ENCODE measurements at regions of chr22 and their contacts with region 1.

Region 1: GRCh38 chr22:43031617-43032016 is 16.7 kb upstream of the PACSIN2 start:
- DNase-seq: no peak

Region 2: DNA sequence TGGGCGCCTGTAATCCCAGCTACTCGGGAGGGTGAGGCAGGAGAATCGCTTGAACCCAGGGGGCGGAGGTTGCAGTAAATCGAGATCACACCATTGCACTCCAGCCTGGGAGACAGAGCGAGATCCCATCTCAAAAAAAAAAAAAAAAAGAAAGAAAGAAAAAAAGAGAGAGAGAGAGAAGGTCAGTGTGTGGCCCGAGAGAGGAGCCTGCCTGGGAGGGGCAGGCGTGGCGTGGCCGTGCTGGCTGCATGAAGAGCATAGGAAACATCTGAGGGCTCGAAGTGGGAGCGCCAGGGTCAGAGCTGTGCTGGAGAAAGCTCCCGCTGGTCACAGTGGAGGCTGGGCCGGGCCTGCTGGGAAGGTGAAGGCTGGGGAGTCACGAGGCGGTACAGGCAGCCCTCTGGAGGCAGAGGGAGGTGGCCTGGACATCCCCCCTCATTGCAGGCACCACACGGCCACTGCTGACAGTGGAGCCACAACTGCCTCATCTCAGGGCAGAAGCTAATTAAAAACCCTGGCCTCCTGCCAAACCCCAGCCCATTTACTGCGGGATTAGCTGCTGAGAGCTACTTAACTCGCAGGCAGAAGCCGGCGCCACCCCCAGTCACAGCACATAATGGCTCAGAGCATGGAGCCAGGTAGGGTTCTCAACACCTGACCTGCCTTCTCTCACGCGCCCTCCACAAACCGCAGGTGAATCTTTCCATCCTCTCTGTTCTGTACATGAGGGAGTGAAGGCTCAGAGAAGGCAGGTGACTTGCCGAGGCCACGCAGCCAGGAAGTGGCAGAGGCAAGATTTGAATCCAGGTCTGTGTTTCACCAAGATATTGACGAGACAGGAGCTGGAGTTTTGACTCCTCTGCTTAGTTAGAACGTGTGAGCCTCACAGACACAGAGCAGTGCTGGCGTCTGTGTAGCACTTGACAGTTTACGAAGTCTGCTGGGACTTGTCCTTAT is 632.0 kb before region 1 on chr22:
- intact Hi-C with region 1: no loop called
- DNase-seq: peak in 2 of 10 donors; percentile 29 to 49

Region 3: GRCh38 chr22:42868751-42869251 is 162.8 kb before region 1 on chr22:
- intact Hi-C with region 1: loop called (anchors 5 kb)
- DNase-seq: peak; percentile 47 to 94 (median 62)

Measured in posterior cingulate gyrus (tissue), 11 donors.